HepG2 (cell line): ENCODE measurements at regions of chr9 and their contacts with region 1.

Region 1: GRCh38 chr9:8907863-8908262 is 1108.3 kb upstream of the DMAC1 start:
- DNase-seq: no peak
- ATAC-seq: no peak
- H3K4me3 ChIP-seq: no peak overlapping the region
- H3K27ac ChIP-seq: no peak overlapping the region
- H3K4me1 ChIP-seq: no peaks in the 10 kb centered on the region
- H3K27me3 ChIP-seq: no peaks in the 10 kb centered on the region
- CTCF ChIP-seq: no peak
- EP300 ChIP-seq: no peak
- POLR2A ChIP-seq: no peak
- RAD21 ChIP-seq: no peak

Region 2: GRCh38 chr9:8880060-8880459 is 27.8 kb before region 1 on chr9:
- CTCF ChIA-PET with region 1: no interaction called
- POLR2A ChIA-PET with region 1: no interaction called
- in situ Hi-C with region 1: no loop called
- intact Hi-C with region 1: loop called (anchors 1 kb)
- DNase-seq: no peak
- ATAC-seq: no peak
- H3K4me3 ChIP-seq: no peak overlapping the region
- H3K27ac ChIP-seq: no peak overlapping the region
- H3K4me1 ChIP-seq: no peaks in the 10 kb centered on the region
- H3K27me3 ChIP-seq: 0 out of 5 replicates have a peak, but pooled peaks cover 0 to 1% of the 10 kb centered on the region in 2 experiments
- CTCF ChIP-seq: no peak
- EP300 ChIP-seq: no peak
- POLR2A ChIP-seq: no peak
- RAD21 ChIP-seq: no peak

Region 3: GRCh38 chr9:8946461-8946860 is 38.6 kb after region 1 on chr9:
- CTCF ChIA-PET with region 1: no interaction called
- POLR2A ChIA-PET with region 1: no interaction called
- in situ Hi-C with region 1: no loop called
- intact Hi-C with region 1: loop called (anchors 2 kb)
- DNase-seq: no peak
- ATAC-seq: no peak
- H3K4me3 ChIP-seq: no peak overlapping the region
- H3K27ac ChIP-seq: no peak overlapping the region
- H3K4me1 ChIP-seq: no peaks in the 10 kb centered on the region
- H3K27me3 ChIP-seq: no peaks in the 10 kb centered on the region
- CTCF ChIP-seq: no peak
- EP300 ChIP-seq: no peak
- POLR2A ChIP-seq: no peak
- RAD21 ChIP-seq: no peak